ENCODE measurements at regions of chrX and their contacts with region 1.

Region 1: DNA sequence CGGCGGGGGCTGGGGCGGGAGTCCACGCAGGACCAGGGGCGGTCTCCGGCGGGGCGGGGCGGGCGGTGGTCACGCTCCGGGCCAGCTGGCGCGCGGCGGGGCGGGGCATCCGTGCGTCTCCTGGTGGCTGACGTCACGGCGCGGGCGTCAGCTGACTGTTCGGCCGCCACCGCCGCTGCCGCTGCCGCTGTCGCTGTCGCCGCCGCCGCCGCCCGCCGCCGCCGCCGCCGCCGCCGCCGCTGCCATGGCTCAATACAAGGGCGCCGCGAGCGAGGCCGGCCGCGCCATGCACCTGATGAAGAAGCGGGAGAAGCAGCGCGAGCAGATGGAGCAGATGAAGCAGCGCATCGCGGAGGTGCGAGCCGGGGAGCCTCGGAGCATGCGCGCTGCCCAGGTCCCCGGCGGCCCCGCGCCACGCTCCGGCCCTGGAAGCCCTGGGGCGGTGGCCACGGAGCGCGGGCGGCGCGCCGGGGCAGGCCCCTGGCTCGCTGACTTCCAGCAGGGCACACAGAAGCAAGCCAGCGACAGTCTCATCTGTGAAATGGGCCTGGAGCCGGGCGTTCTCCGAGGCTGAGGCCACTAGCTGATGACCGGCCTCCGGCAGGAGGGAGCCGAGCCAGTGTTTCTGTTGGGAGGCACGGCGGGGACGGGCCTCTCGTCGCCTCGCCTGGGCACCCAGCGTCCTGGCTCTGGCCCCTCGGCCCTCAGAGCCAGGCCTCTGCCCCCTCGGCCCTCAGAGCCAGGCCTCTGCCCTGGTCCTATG is at the start of gene FAM50A:
- DNase-seq: peak; percentile 86 to 92
- ATAC-seq: peak; percentile 83
- H3K4me3 ChIP-seq: peak within 1 kb of the TSS; percentile 23 to 59
- H3K27ac ChIP-seq: peak within 1 kb of the TSS in 1 of 2 donors; percentile 84
- H3K4me1 ChIP-seq: no peaks in the 10 kb centered on the region
- H3K27me3 ChIP-seq: no peaks in the 10 kb centered on the region
- total RNA-seq, gene FAM50A: 57.1 to 62.9 TPM

Region 2: GRCh38 chrX:153693191-153694086 is 750.7 kb before region 1 on chrX:
- intact Hi-C with region 1: no loop called
- DNase-seq: peak in 1 of 2 donors; percentile 73
- ATAC-seq: no peak
- H3K4me3 ChIP-seq: no peak overlapping the region
- H3K27ac ChIP-seq: no peak overlapping the region
- H3K4me1 ChIP-seq: no peaks in the 10 kb centered on the region
- H3K27me3 ChIP-seq: no peaks in the 10 kb centered on the region

Region 3: DNA sequence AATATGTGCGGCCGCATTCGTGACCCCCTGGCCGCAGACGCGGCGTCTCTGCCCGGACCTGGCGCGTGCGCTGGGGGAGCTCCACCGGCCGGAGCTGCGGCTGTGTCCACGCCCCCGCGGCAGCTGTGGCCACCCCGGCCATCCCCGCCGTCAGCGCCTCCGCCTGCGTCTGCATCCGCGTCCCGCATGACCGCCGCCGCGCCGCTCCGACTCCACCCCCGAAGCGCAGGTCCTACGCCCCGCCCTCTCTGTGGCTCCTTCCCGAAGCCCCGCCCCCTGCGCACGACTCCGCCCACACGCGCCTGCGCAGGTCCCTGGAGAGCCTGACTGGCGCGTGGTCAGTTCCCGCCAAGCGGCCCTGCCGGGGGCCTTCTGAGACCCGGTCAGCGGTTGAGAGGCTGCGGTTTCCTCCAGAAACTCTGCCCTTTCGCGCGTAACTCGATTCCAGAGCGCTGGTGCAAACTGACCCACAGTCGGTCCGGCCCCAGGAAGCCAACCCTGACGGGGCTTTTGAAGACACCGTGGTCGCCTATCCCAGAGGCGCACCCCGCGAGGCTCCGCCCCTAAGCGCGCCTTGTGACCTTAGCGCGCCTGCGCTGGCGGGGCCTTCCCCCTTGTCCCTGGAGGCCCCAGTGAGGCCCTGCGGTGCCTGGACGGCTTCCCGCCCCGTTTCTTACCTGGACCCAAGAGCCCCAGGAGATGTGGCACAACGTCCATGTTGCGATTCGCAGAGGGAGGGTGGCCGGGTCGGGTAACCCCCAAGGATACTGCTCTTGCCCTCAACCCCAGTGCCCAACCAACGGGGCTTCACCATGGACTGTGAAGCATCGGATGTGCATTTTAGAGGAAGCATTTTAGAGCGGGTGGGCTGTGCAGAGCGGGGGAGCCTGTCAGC is 34.8 kb after region 1 on chrX and contains the start of gene LAGE3:
- intact Hi-C with region 1: loop called in 1 of 2 experiments (anchors 1 kb)
- DNase-seq: peak; percentile 96 to 97
- ATAC-seq: peak; percentile 95
- H3K4me3 ChIP-seq: peak within 1 kb of the TSS in 1 of 2 donors; percentile 55
- H3K27ac ChIP-seq: peak within 1 kb of the TSS in 1 of 2 donors; percentile 68
- H3K4me1 ChIP-seq: no peaks in the 10 kb centered on the region
- H3K27me3 ChIP-seq: no peaks in the 10 kb centered on the region
- total RNA-seq, gene LAGE3: 6.0 to 8.3 TPM